CD8-positive, alpha-beta T cell (primary cell): ENCODE measurements at regions of chr2 and their contacts with region 1.

Region 1: DNA sequence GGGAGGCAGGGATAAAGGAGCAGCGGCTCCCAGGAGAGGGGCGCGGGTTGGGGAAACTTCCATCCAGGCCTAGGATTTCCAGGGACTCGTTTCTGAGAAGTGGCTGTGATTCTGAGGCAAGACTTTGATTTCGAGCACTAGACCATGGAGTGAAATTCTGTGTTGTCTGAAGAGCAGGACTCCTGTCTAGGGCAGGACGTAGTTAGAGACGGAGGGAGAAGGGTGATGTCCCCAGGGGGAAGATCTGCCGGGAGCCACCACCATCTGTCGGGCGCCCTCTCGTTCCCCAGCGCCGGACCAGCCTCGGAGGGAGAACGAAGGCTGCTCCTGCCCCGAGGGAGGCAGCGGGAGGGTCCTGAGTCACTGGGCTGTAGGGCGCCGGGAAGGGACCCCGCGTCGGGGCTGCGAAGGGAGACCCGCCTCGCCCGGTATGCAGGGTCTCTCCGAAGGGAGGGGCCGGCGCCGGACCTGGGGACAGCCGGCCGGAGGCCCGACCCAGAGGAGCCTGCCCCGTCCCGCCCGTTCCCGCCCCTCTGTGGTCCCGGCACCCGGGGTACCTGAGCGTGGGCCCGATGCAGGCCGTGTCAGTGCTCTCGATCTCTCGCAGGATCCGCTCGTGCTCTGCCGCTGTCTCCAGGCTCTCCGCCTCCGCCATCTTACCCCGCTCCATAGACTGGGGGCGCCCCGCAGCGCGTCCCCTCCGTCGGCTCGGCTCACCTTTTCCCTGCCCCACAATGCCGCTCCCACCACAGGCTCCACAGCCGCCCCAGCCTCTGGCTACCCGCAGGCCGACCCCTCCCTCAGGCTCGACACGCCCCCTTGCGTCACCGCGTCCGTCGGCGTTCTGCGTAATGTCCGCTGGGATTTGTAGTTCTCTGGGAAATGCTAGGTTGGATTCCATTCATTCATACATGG is at the start of gene EXOC6B:
- DNase-seq: peak; percentile 67 to 91 (median 89)
- ATAC-seq: peak; percentile 89
- H3K4me3 ChIP-seq: peak within 1 kb of the TSS; percentile 70 to 88
- H3K4me3 Mint-ChIP-seq: peak within 1 kb of the TSS; percentile 98
- H3K27ac ChIP-seq: peak within 1 kb of the TSS; percentile 31 to 65
- H3K27ac Mint-ChIP-seq: peak within 1 kb of the TSS; percentile 96
- H3K4me1 ChIP-seq: peaks cover 20% of the 10 kb centered on the region
- H3K4me1 Mint-ChIP-seq: peaks cover 44% of the 10 kb centered on the region
- H3K27me3 ChIP-seq: no peaks in the 10 kb centered on the region
- H3K27me3 Mint-ChIP-seq: peaks cover 11% of the 10 kb centered on the region
- CTCF ChIP-seq: no peak
- total RNA-seq, gene EXOC6B: 13.1 to 14.9 TPM

Region 2: DNA sequence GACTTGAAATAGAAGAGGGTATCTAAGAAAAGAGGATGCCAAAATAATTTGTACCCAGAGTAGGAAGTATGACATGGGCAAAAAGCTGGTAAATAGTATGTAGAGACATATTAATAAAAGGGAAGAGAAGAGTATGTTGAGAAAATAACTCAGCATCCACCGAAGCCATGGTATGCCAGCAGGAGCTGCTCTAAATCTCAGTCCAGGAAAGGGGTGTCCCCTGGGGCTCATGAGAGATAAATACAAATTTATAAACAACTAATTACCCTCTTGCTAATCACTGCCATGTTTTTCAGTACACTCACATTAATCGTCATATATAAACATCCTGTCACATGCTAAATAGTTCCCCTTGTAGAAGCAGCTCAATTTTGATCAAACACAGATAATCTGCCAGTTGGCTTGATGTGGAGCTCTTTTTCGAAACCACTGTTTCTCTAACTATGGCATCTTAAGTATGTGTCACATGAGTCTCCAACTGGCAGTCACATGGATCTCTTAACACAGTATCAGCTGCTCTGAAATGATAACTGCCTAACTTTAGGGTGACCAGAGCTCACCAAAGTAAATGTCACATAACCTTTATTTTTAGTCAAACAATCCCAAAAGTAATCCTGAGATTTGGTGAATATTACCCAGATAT is 31.6 kb before region 1 on chr2:
- CTCF ChIA-PET with region 1: no interaction called
- POLR2A ChIA-PET with region 1: no interaction called
- intact Hi-C with region 1: no loop called
- DNase-seq: no peak
- ATAC-seq: no peak
- H3K4me3 ChIP-seq: no peak overlapping the region
- H3K4me3 Mint-ChIP-seq: no peak overlapping the region
- H3K27ac ChIP-seq: no peak overlapping the region
- H3K27ac Mint-ChIP-seq: no peak overlapping the region
- H3K4me1 ChIP-seq: no peaks in the 10 kb centered on the region
- H3K4me1 Mint-ChIP-seq: peaks cover 11% of the 10 kb centered on the region
- H3K27me3 ChIP-seq: no peaks in the 10 kb centered on the region
- H3K27me3 Mint-ChIP-seq: no peaks in the 10 kb centered on the region
- CTCF ChIP-seq: no peak

Region 3: GRCh38 chr2:72806280-72806945 is 19.1 kb before region 1 on chr2:
- CTCF ChIA-PET with region 1: no interaction called
- POLR2A ChIA-PET with region 1: no interaction called
- intact Hi-C with region 1: no loop called
- DNase-seq: no peak
- ATAC-seq: no peak
- H3K4me3 ChIP-seq: no peak overlapping the region
- H3K4me3 Mint-ChIP-seq: no peak overlapping the region
- H3K27ac ChIP-seq: no peak overlapping the region
- H3K27ac Mint-ChIP-seq: no peak overlapping the region
- H3K4me1 ChIP-seq: no peaks in the 10 kb centered on the region
- H3K4me1 Mint-ChIP-seq: peaks cover 7% of the 10 kb centered on the region
- H3K27me3 ChIP-seq: no peaks in the 10 kb centered on the region
- H3K27me3 Mint-ChIP-seq: no peaks in the 10 kb centered on the region
- CTCF ChIP-seq: no peak

Region 4: GRCh38 chr2:72862239-72862988 is 36.9 kb after region 1 on chr2:
- CTCF ChIA-PET with region 1: interaction called, 4 read pairs
- POLR2A ChIA-PET with region 1: no interaction called
- intact Hi-C with region 1: loop called in 1 of 2 experiments (anchors 2 kb)
- DNase-seq: peak; percentile 69 to 91 (median 84)
- ATAC-seq: peak; percentile 94
- H3K4me3 ChIP-seq: peak overlapping the region; percentile 0 to 16
- H3K4me3 Mint-ChIP-seq: peak overlapping the region; percentile 48
- H3K27ac ChIP-seq: no peak overlapping the region
- H3K27ac Mint-ChIP-seq: no peak overlapping the region
- H3K4me1 ChIP-seq: peaks cover 5% of the 10 kb centered on the region
- H3K4me1 Mint-ChIP-seq: peaks cover 11% of the 10 kb centered on the region
- H3K27me3 ChIP-seq: peaks cover 8 to 13% of the 10 kb centered on the region in 2 experiments
- H3K27me3 Mint-ChIP-seq: peaks cover 54% of the 10 kb centered on the region
- CTCF ChIP-seq: peak; percentile 73

Region 5: DNA sequence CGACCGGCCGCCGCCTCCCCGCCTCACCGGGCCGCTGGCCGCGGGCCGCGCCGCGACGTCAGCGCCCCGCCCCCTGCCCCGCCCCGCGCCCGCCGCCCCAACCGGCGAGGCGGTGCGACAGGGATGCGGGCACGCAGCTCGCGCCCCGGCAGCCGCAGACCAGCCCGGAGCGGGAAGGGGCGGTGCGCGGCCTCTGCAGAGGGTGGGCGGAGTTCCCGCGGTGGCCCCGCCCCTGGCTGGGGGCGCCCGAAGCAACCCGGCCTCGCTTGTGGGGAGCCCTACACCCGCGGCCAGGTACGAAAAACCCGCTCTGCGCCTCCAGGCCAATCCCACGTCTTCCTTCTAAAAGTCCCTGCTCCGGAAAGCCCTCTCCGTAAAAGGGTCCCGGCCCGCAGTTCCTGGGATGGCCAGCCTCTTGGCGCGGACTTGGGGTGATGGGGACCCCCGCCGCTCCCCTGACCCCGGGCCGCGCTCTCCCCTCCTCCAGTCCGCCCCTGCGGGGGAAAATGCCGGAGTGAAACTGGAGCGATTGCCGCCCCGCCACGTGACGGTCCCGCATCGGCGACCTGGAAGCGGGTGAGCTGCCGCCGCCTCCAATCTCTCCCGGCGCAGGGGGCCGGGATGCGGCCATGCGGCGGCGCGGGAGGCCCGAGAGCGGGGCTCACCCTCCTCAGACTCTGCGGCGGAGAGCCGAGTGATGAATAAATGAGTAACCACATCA is 287.6 kb after region 1 on chr2 and contains the start of gene RAB11FIP5:
- CTCF ChIA-PET with region 1: no interaction called
- POLR2A ChIA-PET with region 1: no interaction called
- intact Hi-C with region 1: loop called in 1 of 2 experiments (anchors 2 kb)
- DNase-seq: peak; percentile 43 to 90 (median 73)
- ATAC-seq: peak; percentile 90
- H3K4me3 ChIP-seq: peak within 1 kb of the TSS; percentile 68 to 70
- H3K4me3 Mint-ChIP-seq: peak within 1 kb of the TSS; percentile 82
- H3K27ac ChIP-seq: peak within 1 kb of the TSS; percentile 32 to 37
- H3K27ac Mint-ChIP-seq: no peak within 1 kb of the TSS
- H3K4me1 ChIP-seq: peaks cover 15% of the 10 kb centered on the region
- H3K4me1 Mint-ChIP-seq: peaks cover 18% of the 10 kb centered on the region
- H3K27me3 ChIP-seq: peaks cover 0 to 3% of the 10 kb centered on the region in 2 experiments
- H3K27me3 Mint-ChIP-seq: no peaks in the 10 kb centered on the region
- CTCF ChIP-seq: no peak
- total RNA-seq, gene RAB11FIP5: 4.7 to 10.7 TPM

Region 6: DNA sequence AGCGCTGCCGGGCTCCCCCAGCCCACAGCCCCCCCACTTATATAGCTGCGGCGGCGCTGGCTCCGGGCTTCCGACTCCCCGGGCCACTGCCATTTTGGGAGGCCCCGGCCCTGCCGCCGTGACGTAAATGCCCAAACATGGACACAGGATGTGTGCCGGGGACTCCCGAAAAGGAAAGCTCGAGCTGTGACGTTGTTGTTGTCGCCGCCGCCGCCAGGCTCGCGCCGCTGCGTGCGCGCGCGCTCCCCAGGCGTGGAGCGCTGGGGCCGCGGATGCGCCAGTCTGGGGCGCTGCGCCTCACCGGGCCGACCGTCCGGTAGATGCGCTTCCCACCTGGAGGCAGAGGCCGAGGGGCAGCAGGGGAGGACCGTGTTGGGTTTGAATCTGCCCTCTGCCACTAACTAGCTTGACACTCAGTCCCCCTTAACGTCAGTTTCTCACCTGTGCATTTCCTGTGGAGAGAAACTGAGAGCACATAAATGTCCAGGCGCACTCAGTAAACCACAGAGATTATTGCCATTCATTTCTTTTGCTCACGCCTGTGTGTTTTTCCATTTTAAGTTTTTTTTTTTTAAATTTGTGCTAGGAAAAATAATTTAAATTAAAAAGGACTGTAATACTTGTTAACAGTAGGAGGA is 468.2 kb after region 1 on chr2 and contains the start of gene EGR4:
- CTCF ChIA-PET with region 1: no interaction called
- POLR2A ChIA-PET with region 1: no interaction called
- intact Hi-C with region 1: loop called in 1 of 2 experiments (anchors 10 kb)
- DNase-seq: peak; percentile 74 to 96 (median 84)
- ATAC-seq: peak; percentile 92
- H3K4me3 ChIP-seq: peak within 1 kb of the TSS; percentile 51 to 73
- H3K4me3 Mint-ChIP-seq: peak within 1 kb of the TSS; percentile 78
- H3K27ac ChIP-seq: no peak within 1 kb of the TSS
- H3K27ac Mint-ChIP-seq: no peak within 1 kb of the TSS
- H3K4me1 ChIP-seq: peaks cover 26% of the 10 kb centered on the region
- H3K4me1 Mint-ChIP-seq: peaks cover 14% of the 10 kb centered on the region
- H3K27me3 ChIP-seq: peaks cover 35 to 37% of the 10 kb centered on the region in 2 experiments
- H3K27me3 Mint-ChIP-seq: peaks cover 62% of the 10 kb centered on the region
- CTCF ChIP-seq: no peak
- total RNA-seq, gene EGR4: 0.14 to 0.22 TPM